Activated CD8-positive, alpha-beta T cell treated with anti-CD3 and anti-CD28 coated beads for 36 hours (primary cell): ENCODE measurements at regions of chr5 and their contacts with region 1.

Region 1: DNA sequence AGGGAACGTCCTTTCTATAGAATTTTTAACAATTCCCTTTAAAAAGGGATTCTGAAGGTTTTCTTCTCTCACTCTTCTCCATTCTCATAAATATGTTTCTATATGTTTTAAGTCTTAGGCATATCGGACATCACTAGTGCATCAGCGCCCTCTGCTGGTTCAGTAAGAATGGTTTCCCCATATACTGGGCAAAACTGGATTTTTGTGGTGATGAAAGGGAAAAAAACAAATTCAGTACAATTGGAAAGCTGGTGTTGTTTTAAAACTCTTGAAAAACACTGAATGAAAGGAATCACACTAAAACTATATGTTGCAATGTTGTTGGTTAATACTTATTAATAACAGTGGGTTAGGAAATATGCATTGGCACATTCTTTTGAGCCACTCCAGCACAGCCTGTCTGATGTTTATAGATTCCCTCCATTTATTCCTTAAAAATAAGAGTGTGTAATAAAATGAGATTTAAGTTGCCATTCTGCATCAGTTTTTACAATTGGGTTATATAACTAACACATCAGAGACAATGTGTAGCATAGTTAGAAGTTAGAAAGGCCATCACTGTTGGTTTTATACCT is 15.8 kb downstream of the CWC27 start:
- DNase-seq: peak; percentile 87
- ATAC-seq: peak; percentile 83
- H3K4me3 Mint-ChIP-seq: no peak overlapping the region
- H3K27ac Mint-ChIP-seq: no peak overlapping the region
- H3K4me1 Mint-ChIP-seq: peaks cover 8% of the 10 kb centered on the region
- H3K27me3 Mint-ChIP-seq: no peaks in the 10 kb centered on the region
- CTCF ChIP-seq: peak; percentile 92

Region 2: DNA sequence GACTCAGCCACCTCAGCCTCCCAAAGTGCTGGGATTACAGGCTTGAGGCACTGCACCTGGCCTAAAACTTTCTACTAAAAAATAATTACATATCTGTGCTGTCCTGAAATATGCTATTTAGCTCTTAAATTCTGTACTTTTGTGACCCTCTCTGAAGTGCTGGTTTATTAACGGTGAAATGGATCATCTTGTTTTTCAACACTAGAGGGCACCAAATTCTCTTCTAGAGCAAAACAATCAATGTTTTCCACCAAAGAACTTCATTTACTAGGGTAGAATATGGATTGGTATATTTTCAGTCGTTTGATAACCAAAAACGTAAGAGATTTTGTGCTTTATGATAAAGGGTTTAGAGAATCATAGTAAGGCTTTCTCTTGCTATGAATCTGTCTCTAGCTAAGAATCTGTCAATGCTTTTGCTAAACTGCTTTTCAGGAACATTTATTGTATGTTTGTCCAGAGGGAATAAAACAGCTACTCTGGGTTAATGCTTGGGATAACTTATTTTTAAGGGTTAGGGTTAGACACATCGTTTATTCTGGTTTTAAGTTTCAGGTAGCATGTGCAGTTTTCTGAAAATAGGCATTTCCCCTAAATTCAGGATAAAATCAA is 555.3 kb before region 1 on chr5:
- CTCF ChIA-PET with region 1: no interaction called
- POLR2A ChIA-PET with region 1: no interaction called
- intact Hi-C with region 1: loop called (anchors 5 kb)
- DNase-seq: no peak
- ATAC-seq: no peak
- H3K4me3 Mint-ChIP-seq: no peak overlapping the region
- H3K27ac Mint-ChIP-seq: no peak overlapping the region
- H3K4me1 Mint-ChIP-seq: no peaks in the 10 kb centered on the region
- H3K27me3 Mint-ChIP-seq: no peaks in the 10 kb centered on the region
- CTCF ChIP-seq: peak; percentile 77

Region 3: DNA sequence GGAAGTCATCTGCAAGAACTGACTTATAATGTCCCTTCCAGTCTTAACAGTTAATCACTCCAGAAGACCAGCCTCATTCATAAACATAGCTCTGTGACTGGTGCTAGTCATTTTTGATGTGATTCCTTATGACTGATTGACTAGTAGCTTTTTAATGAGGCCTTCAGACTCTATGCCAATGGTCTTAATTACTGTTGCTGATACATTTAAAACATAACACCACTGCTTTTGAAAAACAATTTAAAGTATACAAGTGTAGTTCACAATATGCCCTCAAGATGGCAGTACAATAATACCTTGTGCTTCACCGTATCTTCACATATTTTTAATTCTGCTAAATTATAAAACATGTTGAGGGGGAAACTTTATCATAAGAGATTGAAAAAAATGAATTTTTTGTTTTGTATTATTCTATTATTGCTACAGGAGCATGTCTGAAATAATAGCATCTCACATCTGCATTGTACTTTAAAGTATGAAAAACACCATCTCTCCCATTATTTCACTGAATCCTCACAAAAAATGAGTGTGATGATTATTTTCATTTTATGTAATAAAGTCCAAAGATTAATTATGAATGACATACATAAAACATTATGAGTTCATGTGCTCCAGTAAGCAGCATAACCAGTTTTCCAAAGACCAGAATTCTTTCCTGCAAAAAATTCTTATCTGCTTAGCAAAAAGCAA is 149.4 kb before region 1 on chr5:
- CTCF ChIA-PET with region 1: interaction called, 75 read pairs
- POLR2A ChIA-PET with region 1: no interaction called
- intact Hi-C with region 1: loop called (anchors 1 kb)
- DNase-seq: no peak
- ATAC-seq: peak; percentile 45
- H3K4me3 Mint-ChIP-seq: no peak overlapping the region
- H3K27ac Mint-ChIP-seq: no peak overlapping the region
- H3K4me1 Mint-ChIP-seq: peaks cover 2% of the 10 kb centered on the region
- H3K27me3 Mint-ChIP-seq: peaks cover 20% of the 10 kb centered on the region
- CTCF ChIP-seq: peak; percentile 91

Region 4: GRCh38 chr5:64768358-64769312 is 15.9 kb before region 1 on chr5 and contains the starts of genes CWC27 and SREK1IP1:
- CTCF ChIA-PET with region 1: interaction called, 27 read pairs
- POLR2A ChIA-PET with region 1: interaction called, 5 read pairs
- intact Hi-C with region 1: no loop called
- DNase-seq: peak; percentile 85
- ATAC-seq: peak; percentile 98
- H3K4me3 Mint-ChIP-seq: peak within 1 kb of the TSS; percentile 100
- H3K27ac Mint-ChIP-seq: peak within 1 kb of the TSS; percentile 99
- H3K4me1 Mint-ChIP-seq: peaks cover 48% of the 10 kb centered on the region
- H3K27me3 Mint-ChIP-seq: no peaks in the 10 kb centered on the region
- CTCF ChIP-seq: no peak
- total RNA-seq, gene CWC27: 32.3 to 38.1 TPM
- total RNA-seq, gene SREK1IP1: 20.5 to 22.9 TPM